Tibial artery (tissue), 4 donors: ENCODE measurements at regions of chr4 and their contacts with region 1.

Region 1: GRCh38 chr4:25234390-25235370 is 847 bp downstream of the PI4K2B start:
- DNase-seq: peak; percentile 33 to 67
- H3K4me3 ChIP-seq: peak overlapping the region; percentile 67 to 93
- H3K27ac ChIP-seq: peak overlapping the region; percentile 89 to 98
- H3K4me1 ChIP-seq: peaks cover 0 to 8% (median 2%) of the 10 kb centered on the region in 4 donors
- H3K27me3 ChIP-seq: no peaks in the 10 kb centered on the region
- CTCF ChIP-seq: peak; percentile 48 to 51

Region 2: GRCh38 chr4:25172961-25173915 is 61.4 kb before region 1 on chr4:
- intact Hi-C with region 1: loop called (anchors 5 kb)
- DNase-seq: peak; percentile 56 to 71
- H3K4me3 ChIP-seq: no peak overlapping the region
- H3K27ac ChIP-seq: peak overlapping the region; percentile 30 to 71
- H3K4me1 ChIP-seq: peaks cover 0 to 23% (median 16%) of the 10 kb centered on the region in 4 donors
- H3K27me3 ChIP-seq: no peaks in the 10 kb centered on the region
- CTCF ChIP-seq: no peak

Region 3: DNA sequence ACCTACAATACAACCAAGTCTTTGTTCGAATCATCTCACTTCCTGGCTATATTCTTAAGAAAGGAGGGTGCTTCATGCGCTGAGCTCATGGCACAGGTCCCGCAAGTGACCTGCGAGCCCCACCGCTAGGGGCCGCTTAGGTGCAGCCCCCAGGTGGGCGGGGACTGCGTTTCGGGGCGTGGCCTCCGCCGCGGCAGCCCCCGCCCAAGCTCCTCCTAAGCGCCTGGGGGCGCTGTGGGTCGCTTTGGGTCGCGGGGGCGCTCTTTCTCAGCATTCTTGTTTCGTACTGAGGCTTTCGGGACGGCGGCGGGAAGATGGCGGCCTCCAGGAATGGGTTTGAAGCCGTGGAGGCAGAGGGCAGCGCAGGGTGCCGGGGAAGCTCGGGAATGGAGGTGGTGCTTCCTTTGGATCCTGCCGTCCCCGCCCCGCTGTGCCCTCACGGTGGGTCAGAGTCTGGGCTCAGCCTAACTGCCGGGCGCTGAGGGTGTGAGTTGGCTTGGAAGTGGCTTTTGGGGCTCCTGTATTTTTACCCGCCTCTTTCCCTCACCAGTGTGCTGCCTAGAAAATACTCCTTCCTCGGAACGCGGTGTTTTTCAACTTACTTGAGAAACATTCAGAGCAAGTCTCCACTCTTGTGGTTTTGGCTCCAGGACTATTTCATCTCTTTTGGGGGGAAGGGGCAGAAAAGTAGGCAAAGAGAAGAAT is 78.0 kb after region 1 on chr4 and contains the start of gene ZCCHC4:
- intact Hi-C with region 1: loop called (anchors 5 kb)
- DNase-seq: peak; percentile 90 to 94
- H3K4me3 ChIP-seq: peak within 1 kb of the TSS; percentile 60 to 83
- H3K27ac ChIP-seq: peak within 1 kb of the TSS; percentile 67
- H3K4me1 ChIP-seq: peaks cover 0 to 10% (median 9%) of the 10 kb centered on the region in 4 donors
- H3K27me3 ChIP-seq: no peaks in the 10 kb centered on the region
- CTCF ChIP-seq: peak; percentile 91 to 98

Region 4: GRCh38 chr4:26803211-26803861 is 1568.7 kb after region 1 on chr4:
- intact Hi-C with region 1: no loop called
- DNase-seq: no peak
- H3K4me3 ChIP-seq: no peak overlapping the region
- H3K27ac ChIP-seq: no peak overlapping the region
- H3K4me1 ChIP-seq: no peaks in the 10 kb centered on the region
- H3K27me3 ChIP-seq: no peaks in the 10 kb centered on the region
- CTCF ChIP-seq: no peak